Activated CD8-positive, alpha-beta T cell treated with anti-CD3 and anti-CD28 coated beads for 36 hours (primary cell): ENCODE measurements at regions of chr3 and their contacts with region 1.

Region 1: GRCh38 chr3:185308126-185308754 is 54.4 kb upstream of the EHHADH start:
- DNase-seq: peak; percentile 71
- ATAC-seq: peak; percentile 61
- H3K4me3 Mint-ChIP-seq: no peak overlapping the region
- H3K27ac Mint-ChIP-seq: no peak overlapping the region
- H3K4me1 Mint-ChIP-seq: no peaks in the 10 kb centered on the region
- H3K27me3 Mint-ChIP-seq: no peaks in the 10 kb centered on the region
- CTCF ChIP-seq: peak; percentile 70

Region 2: DNA sequence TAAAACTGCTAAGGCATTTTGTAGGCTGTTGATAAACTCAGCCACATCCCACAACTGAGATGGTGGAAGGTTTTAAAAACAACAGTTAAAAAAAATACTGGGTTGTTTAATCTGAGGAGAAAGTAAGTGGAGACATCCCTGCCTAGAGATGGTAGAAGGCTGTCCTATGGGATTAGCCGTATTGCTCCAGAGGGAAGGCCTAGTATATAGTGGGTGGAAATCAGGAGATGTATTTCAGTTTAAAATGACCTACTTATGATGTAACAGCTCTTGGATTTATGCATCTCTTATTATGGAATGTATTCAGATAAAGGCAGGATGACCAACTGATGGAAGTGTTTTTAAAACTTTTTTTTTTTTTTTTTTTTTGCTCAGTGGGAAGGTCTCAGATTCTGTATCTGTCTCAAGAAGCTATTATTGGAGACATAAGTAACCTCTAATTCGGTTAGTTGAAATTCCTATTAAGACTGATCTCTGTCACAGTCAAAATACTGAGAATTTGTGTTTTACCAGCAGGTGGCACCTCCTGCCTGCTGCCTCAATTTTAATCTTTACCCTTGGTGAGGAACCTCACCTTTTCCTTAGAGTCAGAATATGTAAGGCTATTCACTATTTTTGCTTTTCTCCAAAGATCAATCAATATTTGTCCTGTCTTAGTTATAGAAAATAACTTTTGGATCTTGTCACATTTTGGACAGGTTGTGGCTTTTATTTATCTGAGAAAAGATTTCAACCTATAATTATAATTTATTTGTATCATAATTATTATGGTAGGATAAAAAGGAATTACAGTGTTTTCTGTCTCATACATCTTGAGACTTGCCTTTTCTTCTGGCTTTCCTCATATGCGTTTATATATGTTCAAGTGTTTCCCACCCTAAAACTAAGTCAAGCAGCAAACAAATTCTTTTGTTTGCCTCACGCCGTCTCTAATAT is 433.3 kb before region 1 on chr3:
- CTCF ChIA-PET with region 1: interaction called, 10 read pairs
- POLR2A ChIA-PET with region 1: no interaction called
- intact Hi-C with region 1: no loop called
- DNase-seq: peak; percentile 26
- ATAC-seq: no peak
- H3K4me3 Mint-ChIP-seq: no peak overlapping the region
- H3K27ac Mint-ChIP-seq: no peak overlapping the region
- H3K4me1 Mint-ChIP-seq: peaks cover 5% of the 10 kb centered on the region
- H3K27me3 Mint-ChIP-seq: no peaks in the 10 kb centered on the region
- CTCF ChIP-seq: peak; percentile 69

Region 3: GRCh38 chr3:185149591-185149990 is 158.6 kb before region 1 on chr3:
- CTCF ChIA-PET with region 1: no interaction called
- POLR2A ChIA-PET with region 1: no interaction called
- intact Hi-C with region 1: no loop called
- DNase-seq: no peak
- ATAC-seq: no peak
- H3K4me3 Mint-ChIP-seq: no peak overlapping the region
- H3K27ac Mint-ChIP-seq: no peak overlapping the region
- H3K4me1 Mint-ChIP-seq: peaks cover 2% of the 10 kb centered on the region
- H3K27me3 Mint-ChIP-seq: peaks cover 28% of the 10 kb centered on the region
- CTCF ChIP-seq: no peak

Region 4: DNA sequence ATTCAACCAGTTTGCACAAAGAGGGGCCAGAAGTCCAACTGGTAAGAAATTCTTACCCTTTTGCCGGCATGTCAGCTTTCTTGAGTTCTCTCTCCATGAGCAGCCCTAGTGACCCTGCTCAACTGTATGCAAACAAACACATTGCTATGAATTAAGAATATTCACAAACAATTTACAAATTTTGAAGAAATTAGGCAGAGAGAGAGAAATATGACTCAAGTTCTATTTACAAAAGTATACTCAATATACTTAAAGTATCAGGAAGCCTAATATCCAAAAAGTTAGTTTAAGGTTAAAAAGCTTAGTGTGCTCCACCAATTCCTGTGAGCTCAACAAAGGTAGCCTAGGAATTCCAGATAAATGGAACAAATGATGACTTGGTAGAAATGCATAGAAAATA is 50.9 kb before region 1 on chr3:
- CTCF ChIA-PET with region 1: no interaction called
- POLR2A ChIA-PET with region 1: no interaction called
- intact Hi-C with region 1: no loop called
- DNase-seq: no peak
- ATAC-seq: no peak
- H3K4me3 Mint-ChIP-seq: no peak overlapping the region
- H3K27ac Mint-ChIP-seq: no peak overlapping the region
- H3K4me1 Mint-ChIP-seq: no peaks in the 10 kb centered on the region
- H3K27me3 Mint-ChIP-seq: peaks cover 2% of the 10 kb centered on the region
- CTCF ChIP-seq: no peak

Region 5: DNA sequence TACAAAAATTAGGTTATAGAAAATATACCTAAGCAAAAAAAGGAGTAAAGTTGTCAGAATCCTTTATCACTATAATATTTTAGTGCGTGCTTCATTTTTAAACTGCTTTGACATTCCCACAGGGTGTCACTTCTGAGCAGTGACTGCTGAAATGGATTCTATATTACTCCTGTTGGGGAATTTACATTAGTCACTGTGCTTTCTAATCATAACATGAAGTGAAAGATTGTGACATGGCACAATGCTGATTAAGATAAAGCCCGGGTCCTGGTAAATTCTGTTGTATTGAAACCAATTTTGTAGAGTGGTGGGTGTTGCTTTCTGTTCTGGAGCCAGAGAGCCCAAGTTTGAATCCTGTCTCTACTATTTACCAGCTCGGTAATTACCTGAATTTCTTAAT is 18.0 kb before region 1 on chr3:
- CTCF ChIA-PET with region 1: interaction called, 14 read pairs
- POLR2A ChIA-PET with region 1: no interaction called
- intact Hi-C with region 1: no loop called
- DNase-seq: no peak
- ATAC-seq: peak; percentile 42
- H3K4me3 Mint-ChIP-seq: no peak overlapping the region
- H3K27ac Mint-ChIP-seq: no peak overlapping the region
- H3K4me1 Mint-ChIP-seq: peaks cover under 1% of the 10 kb centered on the region
- H3K27me3 Mint-ChIP-seq: no peaks in the 10 kb centered on the region
- CTCF ChIP-seq: no peak